ENCODE measurements at regions of chr6 and their contacts with region 1.

Region 1: DNA sequence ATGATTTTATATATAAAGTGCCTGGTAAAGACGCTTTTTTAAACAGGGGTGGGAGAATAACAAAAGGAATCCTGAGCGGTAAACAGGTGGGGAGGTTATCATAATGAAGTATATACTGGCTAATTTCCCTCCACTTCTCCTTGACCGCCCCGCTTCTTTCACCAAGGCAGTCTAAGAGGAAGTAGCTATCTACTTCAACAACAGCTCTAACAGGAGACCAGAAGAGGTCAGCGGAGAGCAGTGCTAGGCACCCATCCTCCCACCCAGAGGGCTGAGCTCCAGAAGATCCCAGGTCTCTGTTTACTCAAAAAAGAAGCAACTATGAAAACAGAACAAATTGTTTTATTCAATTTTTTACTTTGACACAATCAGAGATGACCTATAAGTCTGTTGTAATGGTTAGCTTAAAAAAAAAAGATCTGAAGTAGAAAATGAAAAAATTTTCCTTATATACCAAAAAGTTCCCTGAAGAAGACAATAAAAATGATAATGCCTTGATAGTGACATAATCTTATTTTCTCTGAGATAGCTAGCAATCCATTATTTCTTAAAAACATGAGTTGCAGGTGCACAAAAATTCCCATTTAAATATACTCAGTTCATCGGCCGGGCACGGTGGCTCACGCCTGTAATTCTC is 141.1 kb downstream of the PDSS2 start:
- DNase-seq: peak; percentile 66
- ATAC-seq: peak; percentile 67
- H3K4me3 Mint-ChIP-seq: no peak overlapping the region
- H3K27ac Mint-ChIP-seq: no peak overlapping the region
- H3K4me1 Mint-ChIP-seq: peaks cover 13% of the 10 kb centered on the region
- H3K27me3 Mint-ChIP-seq: no peaks in the 10 kb centered on the region
- CTCF ChIP-seq: peak; percentile 65

Region 2: GRCh38 chr6:107173779-107174178 is 144.4 kb before region 1 on chr6:
- CTCF ChIA-PET with region 1: no interaction called
- POLR2A ChIA-PET with region 1: no interaction called
- intact Hi-C with region 1: no loop called
- DNase-seq: no peak
- ATAC-seq: no peak
- H3K4me3 Mint-ChIP-seq: no peak overlapping the region
- H3K27ac Mint-ChIP-seq: no peak overlapping the region
- H3K4me1 Mint-ChIP-seq: no peaks in the 10 kb centered on the region
- H3K27me3 Mint-ChIP-seq: no peaks in the 10 kb centered on the region
- CTCF ChIP-seq: no peak

Region 3: DNA sequence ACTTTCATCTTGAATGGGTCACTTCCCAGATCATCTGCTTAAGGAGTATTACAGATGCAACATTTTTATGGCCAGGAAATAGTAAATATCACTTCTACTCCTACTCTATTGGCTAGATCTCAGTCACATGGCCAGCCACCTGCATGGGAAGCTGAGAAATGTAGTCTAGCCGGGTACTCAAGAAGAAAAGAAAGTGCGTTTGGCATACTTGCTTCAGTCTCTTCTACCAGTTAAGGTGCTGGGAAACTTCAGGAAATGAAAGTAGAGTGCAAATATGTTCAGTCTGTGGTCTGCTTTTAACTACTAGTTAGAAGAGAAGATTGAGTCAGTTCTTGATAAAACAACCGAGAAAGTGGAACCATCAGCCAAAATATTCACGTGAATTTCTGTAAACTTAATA is 11.9 kb after region 1 on chr6:
- CTCF ChIA-PET with region 1: interaction called, 25 read pairs
- POLR2A ChIA-PET with region 1: no interaction called
- intact Hi-C with region 1: no loop called
- DNase-seq: peak; percentile 53
- ATAC-seq: peak; percentile 93
- H3K4me3 Mint-ChIP-seq: peak overlapping the region; percentile 36
- H3K27ac Mint-ChIP-seq: peak overlapping the region; percentile 76
- H3K4me1 Mint-ChIP-seq: peaks cover 11% of the 10 kb centered on the region
- H3K27me3 Mint-ChIP-seq: no peaks in the 10 kb centered on the region
- CTCF ChIP-seq: no peak

Region 4: GRCh38 chr6:107342144-107342543 is 23.9 kb after region 1 on chr6:
- CTCF ChIA-PET with region 1: interaction called, 18 read pairs
- POLR2A ChIA-PET with region 1: no interaction called
- intact Hi-C with region 1: no loop called
- DNase-seq: no peak
- ATAC-seq: no peak
- H3K4me3 Mint-ChIP-seq: no peak overlapping the region
- H3K27ac Mint-ChIP-seq: no peak overlapping the region
- H3K4me1 Mint-ChIP-seq: peaks cover 3% of the 10 kb centered on the region
- H3K27me3 Mint-ChIP-seq: no peaks in the 10 kb centered on the region
- CTCF ChIP-seq: no peak

Region 5: GRCh38 chr6:107657755-107658461 is 339.7 kb after region 1 on chr6:
- CTCF ChIA-PET with region 1: interaction called, 4 read pairs
- POLR2A ChIA-PET with region 1: no interaction called
- intact Hi-C with region 1: loop called (anchors 10 kb)
- DNase-seq: peak; percentile 88
- ATAC-seq: peak; percentile 97
- H3K4me3 Mint-ChIP-seq: peak overlapping the region; percentile 61
- H3K27ac Mint-ChIP-seq: peak overlapping the region; percentile 35
- H3K4me1 Mint-ChIP-seq: peaks cover 36% of the 10 kb centered on the region
- H3K27me3 Mint-ChIP-seq: no peaks in the 10 kb centered on the region
- CTCF ChIP-seq: no peak

Region 6: GRCh38 chr6:107674995-107675738 is 356.9 kb after region 1 on chr6:
- CTCF ChIA-PET with region 1: interaction called, 12 read pairs
- POLR2A ChIA-PET with region 1: no interaction called
- intact Hi-C with region 1: no loop called
- DNase-seq: peak; percentile 89
- ATAC-seq: peak; percentile 98
- H3K4me3 Mint-ChIP-seq: peak overlapping the region; percentile 53
- H3K27ac Mint-ChIP-seq: peak overlapping the region; percentile 91
- H3K4me1 Mint-ChIP-seq: peaks cover 16% of the 10 kb centered on the region
- H3K27me3 Mint-ChIP-seq: no peaks in the 10 kb centered on the region
- CTCF ChIP-seq: peak; percentile 91

Measured in activated CD8-positive, alpha-beta T cell treated with anti-CD3 and anti-CD28 coated beads for 36 hours (primary cell).